GM12878 (cell line): ENCODE measurements at regions of chr11 and their contacts with region 1.

Region 1: DNA sequence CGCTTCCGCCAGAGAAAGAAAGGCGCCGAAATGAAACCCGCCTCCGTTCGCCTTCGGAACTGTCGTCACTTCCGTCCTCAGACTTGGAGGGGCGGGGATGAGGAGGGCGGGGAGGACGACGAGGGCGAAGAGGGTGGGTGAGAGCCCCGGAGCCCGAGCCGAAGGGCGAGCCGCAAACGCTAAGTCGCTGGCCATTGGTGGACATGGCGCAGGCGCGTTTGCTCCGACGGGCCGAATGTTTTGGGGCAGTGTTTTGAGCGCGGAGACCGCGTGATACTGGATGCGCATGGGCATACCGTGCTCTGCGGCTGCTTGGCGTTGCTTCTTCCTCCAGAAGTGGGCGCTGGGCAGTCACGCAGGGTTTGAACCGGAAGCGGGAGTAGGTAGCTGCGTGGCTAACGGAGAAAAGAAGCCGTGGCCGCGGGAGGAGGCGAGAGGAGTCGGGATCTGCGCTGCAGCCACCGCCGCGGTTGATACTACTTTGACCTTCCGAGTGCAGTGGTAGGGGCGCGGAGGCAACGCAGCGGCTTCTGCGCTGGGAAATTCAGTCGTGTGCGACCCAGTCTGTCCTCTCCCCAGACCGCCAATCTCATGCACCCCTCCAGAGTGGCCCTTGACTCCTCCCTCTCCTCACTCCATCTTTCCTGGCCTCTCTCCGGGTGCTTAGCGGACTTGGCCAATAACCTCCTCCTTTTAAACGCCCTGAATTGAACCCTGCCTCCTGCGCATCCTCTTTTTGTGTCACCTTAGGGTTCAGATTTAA is at the start of gene ATM:
- DNase-seq: peak; percentile 99
- ATAC-seq: peak; percentile 88
- H3K4me3 ChIP-seq: peak within 1 kb of the TSS; percentile 97
- H3K27ac ChIP-seq: peak within 1 kb of the TSS; percentile 99
- H3K4me1 ChIP-seq: peaks cover 19% of the 10 kb centered on the region
- H3K27me3 ChIP-seq: no peaks in the 10 kb centered on the region
- CTCF ChIP-seq: peak; percentile 85 to 96 (median 88)
- EP300 ChIP-seq: peak in 1 of 2 experiments; percentile 50; a peak in 2 of 4 replicates
- POLR2A ChIP-seq: peak; percentile 74
- RAD21 ChIP-seq: peak; percentile 81
- polyA plus RNA-seq, gene ATM: 10.0 to 10.5 TPM

Region 2: DNA sequence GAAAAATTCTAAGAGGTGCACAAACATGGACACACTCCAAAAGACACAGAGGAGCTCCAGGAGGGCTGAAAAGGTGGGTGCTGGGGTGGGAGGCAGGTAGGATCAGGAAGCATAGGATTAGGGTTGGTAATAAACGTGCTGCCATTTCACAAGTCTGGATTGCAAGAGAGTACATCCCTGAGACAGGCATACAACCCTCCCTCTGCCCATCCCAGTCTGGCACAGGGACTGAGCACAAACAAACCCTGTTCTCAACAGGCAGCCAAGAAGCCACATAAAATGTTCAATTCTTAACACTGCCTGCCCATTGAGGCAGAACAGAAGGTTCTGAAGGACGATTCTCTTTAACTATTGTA is 382.8 kb before region 1 on chr11:
- CTCF ChIA-PET with region 1: no interaction called
- POLR2A ChIA-PET with region 1: no interaction called
- RAD21 ChIA-PET with region 1: no interaction called
- SMC1A ChIA-PET with region 1: no interaction called
- in situ Hi-C with region 1: no loop called
- intact Hi-C with region 1: no loop called
- DNase-seq: no peak
- ATAC-seq: peak; percentile 51
- H3K4me3 ChIP-seq: peak overlapping the region; percentile 41
- H3K27ac ChIP-seq: peak overlapping the region; percentile 86
- H3K4me1 ChIP-seq: peaks cover 29% of the 10 kb centered on the region
- H3K27me3 ChIP-seq: no peaks in the 10 kb centered on the region
- CTCF ChIP-seq: no peak
- EP300 ChIP-seq: no peak
- POLR2A ChIP-seq: no peak
- RAD21 ChIP-seq: no peak

Region 3: DNA sequence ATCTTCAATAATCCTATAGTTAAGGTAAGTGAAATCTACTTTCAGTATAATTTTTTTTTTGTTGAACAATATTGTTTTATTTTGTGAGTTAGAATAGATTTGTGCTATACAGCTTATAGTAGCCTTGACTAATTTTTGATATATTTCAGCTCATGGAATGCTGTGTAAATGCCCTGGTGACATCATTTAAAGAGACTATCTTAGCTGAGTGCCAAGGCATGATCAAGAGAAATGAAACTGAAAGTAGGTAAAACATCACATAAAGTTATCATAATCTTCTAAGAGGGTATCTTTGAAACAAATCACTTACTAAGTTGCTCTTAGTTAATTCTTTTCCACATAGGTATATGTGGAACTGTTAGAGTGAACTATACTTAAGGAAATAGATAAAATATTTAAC is 152.9 kb before region 1 on chr11:
- CTCF ChIA-PET with region 1: no interaction called
- POLR2A ChIA-PET with region 1: no interaction called
- RAD21 ChIA-PET with region 1: no interaction called
- SMC1A ChIA-PET with region 1: no interaction called
- in situ Hi-C with region 1: no loop called
- intact Hi-C with region 1: no loop called
- DNase-seq: peak; percentile 4
- ATAC-seq: peak; percentile 88
- H3K4me3 ChIP-seq: no peak overlapping the region
- H3K27ac ChIP-seq: no peak overlapping the region; the same call in 1 of the 2 replicates
- H3K4me1 ChIP-seq: no peaks in the 10 kb centered on the region
- H3K27me3 ChIP-seq: no peaks in the 10 kb centered on the region
- CTCF ChIP-seq: no peak
- EP300 ChIP-seq: no peak
- POLR2A ChIP-seq: no peak
- RAD21 ChIP-seq: no peak

Region 4: DNA sequence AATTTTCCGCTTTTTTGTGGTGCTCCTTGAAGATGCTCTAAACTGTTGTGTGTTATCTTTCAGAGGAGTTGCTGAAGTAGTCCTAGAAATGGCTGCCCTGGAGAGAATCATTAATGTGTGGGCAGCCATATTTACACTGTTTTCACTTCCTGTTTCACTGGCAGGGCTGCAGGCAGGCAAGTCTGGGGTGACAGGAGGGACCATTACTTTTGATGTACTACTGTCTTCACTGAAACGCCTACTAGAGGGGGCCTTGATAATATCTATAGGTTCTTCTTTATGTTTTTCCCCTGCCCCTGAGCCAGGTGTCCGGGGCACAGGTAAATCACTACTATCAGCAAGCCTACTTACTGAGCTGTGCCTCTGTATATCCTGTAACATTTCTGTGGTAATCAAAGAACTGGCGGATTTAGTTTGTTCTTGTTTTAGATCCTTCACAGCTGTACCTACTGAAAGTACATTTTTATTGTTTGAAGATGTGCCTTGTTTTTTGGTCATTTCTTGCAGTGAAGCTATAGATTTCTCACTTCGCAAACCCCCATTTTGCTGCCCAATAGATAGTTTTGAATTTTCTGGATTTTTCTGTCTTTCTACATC is 61.8 kb before region 1 on chr11:
- CTCF ChIA-PET with region 1: interaction called, 4 read pairs
- POLR2A ChIA-PET with region 1: interaction called, 5 read pairs
- RAD21 ChIA-PET with region 1: interaction called, 3 read pairs
- SMC1A ChIA-PET with region 1: interaction called, 3 read pairs
- in situ Hi-C with region 1: no loop called
- intact Hi-C with region 1: loop called (anchors 2 kb)
- DNase-seq: peak; percentile 36
- ATAC-seq: peak; percentile 100
- H3K4me3 ChIP-seq: no peak overlapping the region
- H3K27ac ChIP-seq: no peak overlapping the region; the same call in 1 of the 2 replicates
- H3K4me1 ChIP-seq: peaks cover 11% of the 10 kb centered on the region
- H3K27me3 ChIP-seq: no peaks in the 10 kb centered on the region
- CTCF ChIP-seq: 0 out of 6 replicates have a peak, but pooled peaks of 1 of the 3 experiments have one; percentile 3
- EP300 ChIP-seq: no peak
- POLR2A ChIP-seq: no peak
- RAD21 ChIP-seq: no peak

Region 5: DNA sequence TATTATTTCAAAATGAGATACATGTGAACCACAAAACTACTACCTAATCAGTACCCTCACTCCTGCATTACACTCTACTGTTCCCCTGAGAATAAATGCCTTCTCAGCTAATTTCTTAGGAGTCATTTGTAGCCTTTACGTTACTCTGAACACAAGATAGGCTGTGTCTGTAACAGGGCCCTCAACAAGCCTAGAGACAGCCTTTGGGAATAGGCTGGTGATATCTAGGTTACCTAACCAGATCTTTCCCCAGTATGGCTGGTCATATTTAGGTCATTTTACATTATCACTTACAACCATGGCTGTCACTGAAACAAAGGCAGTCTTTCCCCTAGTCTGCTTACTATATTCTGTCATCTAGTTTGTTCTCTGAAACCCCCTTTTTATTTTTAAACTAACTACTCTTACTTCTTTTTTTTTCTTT is 14.2 kb after region 1 on chr11:
- CTCF ChIA-PET with region 1: interaction called, 33 read pairs
- POLR2A ChIA-PET with region 1: interaction called, 43 read pairs
- RAD21 ChIA-PET with region 1: interaction called, 82 read pairs
- SMC1A ChIA-PET with region 1: interaction called, 112 read pairs
- in situ Hi-C with region 1: no loop called
- intact Hi-C with region 1: loop called (anchors 1 kb)
- DNase-seq: no peak
- ATAC-seq: peak; percentile 74
- H3K4me3 ChIP-seq: no peak overlapping the region
- H3K27ac ChIP-seq: peak overlapping the region; percentile 84
- H3K4me1 ChIP-seq: peaks cover 20% of the 10 kb centered on the region
- H3K27me3 ChIP-seq: no peaks in the 10 kb centered on the region
- CTCF ChIP-seq: no peak
- EP300 ChIP-seq: no peak
- POLR2A ChIP-seq: no peak
- RAD21 ChIP-seq: no peak

Region 6: GRCh38 chr11:108497317-108498045 is 274.6 kb after region 1 on chr11:
- CTCF ChIA-PET with region 1: no interaction called
- POLR2A ChIA-PET with region 1: no interaction called
- RAD21 ChIA-PET with region 1: interaction called, 3 read pairs
- SMC1A ChIA-PET with region 1: no interaction called
- in situ Hi-C with region 1: no loop called
- intact Hi-C with region 1: loop called (anchors 10 kb)
- DNase-seq: peak; percentile 60
- ATAC-seq: peak; percentile 68
- H3K4me3 ChIP-seq: peak overlapping the region; percentile 65
- H3K27ac ChIP-seq: peak overlapping the region; percentile 66
- H3K4me1 ChIP-seq: no peaks in the 10 kb centered on the region
- H3K27me3 ChIP-seq: no peaks in the 10 kb centered on the region
- CTCF ChIP-seq: no peak
- EP300 ChIP-seq: 0 out of 4 replicates have a peak, but pooled peaks of 1 of the 2 experiments have one; percentile 3
- POLR2A ChIP-seq: peak; percentile 83
- RAD21 ChIP-seq: no peak